GM12878 (cell line): ENCODE measurements at regions of chr13 and their contacts with region 1.

Region 1: DNA sequence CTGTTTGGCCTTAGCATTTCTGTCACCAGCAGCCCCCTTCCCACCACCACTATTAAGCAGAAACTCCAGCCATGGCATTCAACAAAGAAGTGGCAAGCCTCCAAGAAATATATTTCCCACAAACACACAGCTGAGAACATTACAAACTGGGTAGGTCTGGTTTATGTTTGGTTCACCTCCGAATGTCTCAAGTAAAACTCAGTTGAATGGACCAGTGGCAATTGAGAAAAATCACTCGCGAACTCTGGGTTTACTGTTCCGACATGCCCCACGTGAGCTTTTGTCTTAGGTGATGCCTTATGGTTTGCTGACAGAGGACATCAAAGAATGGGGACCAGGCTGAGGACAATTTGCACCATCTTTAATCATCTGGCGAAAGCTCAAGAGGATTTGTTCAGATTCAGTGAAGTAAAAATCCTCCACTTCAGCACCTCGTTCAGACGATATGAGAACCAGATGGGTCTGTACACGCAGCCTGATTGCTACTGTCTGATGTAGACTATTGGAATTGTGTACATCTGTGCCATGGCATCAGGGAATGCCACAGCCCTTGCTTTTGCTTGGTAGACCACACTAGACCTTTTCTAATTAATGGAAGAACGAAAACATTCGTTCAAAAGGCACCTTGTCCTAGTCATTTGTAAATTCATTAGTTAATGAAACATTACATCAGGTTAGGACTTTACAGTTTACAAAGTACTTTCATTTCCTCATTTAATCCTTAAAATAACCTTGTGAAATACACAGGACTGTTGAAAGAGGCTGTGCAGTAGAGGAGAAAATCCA is 59.4 kb downstream of the SLC10A2 start:
- DNase-seq: peak; percentile 74
- ATAC-seq: peak; percentile 95
- H3K4me3 ChIP-seq: no peak overlapping the region; the same call in 1 of the 2 replicates
- H3K27ac ChIP-seq: peak overlapping the region; percentile 87
- H3K4me1 ChIP-seq: peaks cover 15% of the 10 kb centered on the region
- H3K27me3 ChIP-seq: no peaks in the 10 kb centered on the region
- CTCF ChIP-seq: no peak
- EP300 ChIP-seq: peak; percentile 90 to 98
- POLR2A ChIP-seq: no peak
- RAD21 ChIP-seq: 0 out of 2 replicates have a peak, but pooled peaks have one; percentile 3

Region 2: GRCh38 chr13:102970542-102970941 is 36.3 kb before region 1 on chr13:
- CTCF ChIA-PET with region 1: interaction called, 4 read pairs
- POLR2A ChIA-PET with region 1: no interaction called
- RAD21 ChIA-PET with region 1: interaction called, 11 read pairs
- SMC1A ChIA-PET with region 1: interaction called, 18 read pairs
- in situ Hi-C with region 1: no loop called
- intact Hi-C with region 1: no loop called
- DNase-seq: peak; percentile 92
- ATAC-seq: peak; percentile 94
- H3K4me3 ChIP-seq: no peak overlapping the region
- H3K27ac ChIP-seq: peak overlapping the region; percentile 69
- H3K4me1 ChIP-seq: peaks cover 26% of the 10 kb centered on the region
- H3K27me3 ChIP-seq: no peaks in the 10 kb centered on the region
- CTCF ChIP-seq: no peak
- EP300 ChIP-seq: peak; percentile 51 to 83; a peak in 2 of 4 replicates
- POLR2A ChIP-seq: no peak
- RAD21 ChIP-seq: peak; percentile 19; the same call in 1 of the 2 replicates

Region 3: GRCh38 chr13:103022328-103022727 is 15.5 kb after region 1 on chr13:
- CTCF ChIA-PET with region 1: no interaction called
- POLR2A ChIA-PET with region 1: interaction called, 7 read pairs
- RAD21 ChIA-PET with region 1: no interaction called
- SMC1A ChIA-PET with region 1: interaction called, 11 read pairs
- in situ Hi-C with region 1: no loop called
- intact Hi-C with region 1: no loop called
- DNase-seq: no peak
- ATAC-seq: no peak
- H3K4me3 ChIP-seq: no peak overlapping the region
- H3K27ac ChIP-seq: no peak overlapping the region
- H3K4me1 ChIP-seq: no peaks in the 10 kb centered on the region
- H3K27me3 ChIP-seq: no peaks in the 10 kb centered on the region
- CTCF ChIP-seq: no peak
- EP300 ChIP-seq: no peak
- POLR2A ChIP-seq: no peak
- RAD21 ChIP-seq: no peak

Region 4: DNA sequence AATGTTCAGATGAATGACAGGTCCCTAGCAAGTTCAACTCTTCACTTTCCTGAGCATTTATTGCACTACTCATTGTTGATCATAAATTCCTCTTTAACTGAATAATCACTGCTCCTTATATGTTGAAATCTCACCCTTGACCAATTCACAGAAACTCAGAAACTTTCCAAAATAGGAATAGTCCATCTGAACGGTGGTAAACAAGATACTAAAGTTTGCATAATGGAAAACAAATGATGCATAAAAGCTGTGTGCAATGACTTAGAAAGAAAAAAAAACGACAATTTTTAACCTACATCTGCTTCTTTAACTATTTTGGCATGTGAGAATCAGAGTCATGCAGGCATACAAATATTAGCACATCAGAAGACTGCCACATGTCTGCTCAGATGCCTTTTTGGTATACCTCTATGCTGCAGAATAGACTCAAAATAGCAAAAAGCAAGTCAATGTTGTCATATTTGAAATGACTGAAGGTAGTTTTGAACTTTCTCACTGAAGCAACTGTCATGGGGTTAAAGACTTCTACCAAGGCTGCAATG is 24.6 kb after region 1 on chr13:
- CTCF ChIA-PET with region 1: interaction called, 3 read pairs
- POLR2A ChIA-PET with region 1: interaction called, 7 read pairs
- RAD21 ChIA-PET with region 1: interaction called, 7 read pairs
- SMC1A ChIA-PET with region 1: interaction called, 8 read pairs
- in situ Hi-C with region 1: no loop called
- intact Hi-C with region 1: loop called (anchors 1 kb)
- DNase-seq: peak; percentile 90
- ATAC-seq: peak; percentile 93
- H3K4me3 ChIP-seq: no peak overlapping the region
- H3K27ac ChIP-seq: peak overlapping the region; percentile 79
- H3K4me1 ChIP-seq: peaks cover 38% of the 10 kb centered on the region
- H3K27me3 ChIP-seq: no peaks in the 10 kb centered on the region
- CTCF ChIP-seq: no peak
- EP300 ChIP-seq: peak; percentile 95 to 99
- POLR2A ChIP-seq: no peak
- RAD21 ChIP-seq: peak; percentile 19

Region 5: GRCh38 chr13:103178986-103179943 is 172.4 kb after region 1 on chr13:
- CTCF ChIA-PET with region 1: no interaction called
- POLR2A ChIA-PET with region 1: no interaction called
- RAD21 ChIA-PET with region 1: no interaction called
- SMC1A ChIA-PET with region 1: no interaction called
- in situ Hi-C with region 1: no loop called
- intact Hi-C with region 1: loop called (anchors 2 kb)
- DNase-seq: peak; percentile 46
- ATAC-seq: peak; percentile 87
- H3K4me3 ChIP-seq: no peak overlapping the region
- H3K27ac ChIP-seq: no peak overlapping the region
- H3K4me1 ChIP-seq: peaks cover 10% of the 10 kb centered on the region
- H3K27me3 ChIP-seq: no peaks in the 10 kb centered on the region
- CTCF ChIP-seq: no peak
- EP300 ChIP-seq: peak in 1 of 2 experiments; percentile 60; a peak in 3 of 4 replicates
- POLR2A ChIP-seq: no peak
- RAD21 ChIP-seq: no peak